Psoas muscle (tissue), 8 donors: ENCODE measurements at regions of chr13 and their contacts with region 1.

Region 1: DNA sequence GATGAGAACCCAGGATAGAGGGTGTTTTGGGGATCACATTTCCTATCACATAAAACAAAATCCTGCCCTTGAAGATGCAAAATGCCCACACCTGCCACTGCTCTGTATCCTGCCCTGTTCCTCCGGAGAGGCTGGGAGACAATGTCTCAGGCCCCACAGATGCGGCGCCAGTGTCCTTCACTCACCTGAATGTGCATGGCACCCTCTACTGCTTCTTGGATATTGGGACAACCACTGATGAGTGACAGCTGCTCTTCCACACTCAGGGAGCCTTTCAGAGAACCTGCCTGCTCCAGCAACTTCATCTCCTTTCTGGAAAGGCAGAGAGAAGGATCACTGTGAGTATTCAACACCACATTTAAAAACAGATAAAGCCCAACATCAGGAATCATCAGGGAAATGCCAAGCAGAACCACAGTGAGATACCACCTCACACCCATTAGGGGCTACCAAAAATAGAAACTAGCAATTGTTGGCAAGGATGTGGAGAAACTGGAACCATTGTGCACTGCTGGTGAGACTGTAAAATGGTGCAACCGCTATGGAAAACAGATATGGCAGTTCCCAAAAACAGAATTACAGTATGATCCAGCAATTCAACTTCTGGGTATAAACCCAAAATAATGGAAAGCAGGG is 36.4 kb downstream of the CRYL1 start:
- DNase-seq: no peak
- ATAC-seq: no peak
- H3K4me3 ChIP-seq: no peak overlapping the region
- H3K27ac ChIP-seq: no peak overlapping the region
- H3K4me1 ChIP-seq: no peaks in the 10 kb centered on the region
- H3K27me3 ChIP-seq: no peaks in the 10 kb centered on the region
- CTCF ChIP-seq: peak; percentile 41

Region 2: DNA sequence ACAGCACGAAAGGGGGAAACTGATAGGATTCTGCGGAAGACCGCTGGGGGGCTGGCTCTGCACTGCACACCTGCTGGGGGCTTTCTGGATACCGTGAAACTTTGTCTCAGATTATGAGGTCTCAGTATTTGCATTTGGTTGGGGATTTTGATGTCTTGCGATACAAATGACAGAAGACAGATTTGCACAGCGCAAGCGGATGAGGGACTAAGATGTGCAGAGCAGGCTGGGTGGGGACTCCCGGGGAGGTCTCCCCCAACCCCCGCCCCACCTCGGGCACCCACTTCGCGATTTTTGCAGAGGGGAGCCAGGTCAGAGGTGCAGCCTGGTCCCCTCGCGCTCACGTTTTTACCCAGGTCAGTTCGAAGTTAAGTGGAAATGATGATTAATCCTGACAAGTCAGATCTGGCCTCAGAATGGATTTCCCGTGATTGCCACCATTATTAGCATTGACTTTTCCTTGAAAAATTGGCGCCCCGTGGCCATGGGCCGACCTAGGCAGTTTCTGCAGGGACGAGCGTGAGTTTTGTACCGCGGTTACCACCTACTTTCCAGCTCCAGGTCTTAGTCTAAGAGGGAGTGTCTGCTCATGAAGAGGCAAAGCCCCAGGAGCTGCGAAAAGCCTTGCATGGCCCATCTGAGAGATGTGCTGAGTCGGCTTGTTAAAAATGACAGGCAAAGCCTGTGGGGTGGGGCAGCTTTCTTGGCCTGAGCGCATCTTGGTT is 295.2 kb before region 1 on chr13:
- intact Hi-C with region 1: loop called in 1 of 2 experiments (anchors 2 kb)
- DNase-seq: no peak
- ATAC-seq: no peak
- H3K4me3 ChIP-seq: peak overlapping the region; percentile 71
- H3K27ac ChIP-seq: no peak overlapping the region
- H3K4me1 ChIP-seq: peaks cover 26% of the 10 kb centered on the region
- H3K27me3 ChIP-seq: peaks cover 2 to 66% (median 31%) of the 10 kb centered on the region in 3 donors
- CTCF ChIP-seq: no peak